ENCODE measurements at regions of chr1 and their contacts with region 1.

Region 1: GRCh38 chr1:113042285-113043143 is 30.5 kb upstream of the LRIG2 start:
- DNase-seq: peak; percentile 49
- ATAC-seq: peak; percentile 12
- H3K4me3 Mint-ChIP-seq: no peak overlapping the region
- H3K27ac Mint-ChIP-seq: no peak overlapping the region
- H3K4me1 Mint-ChIP-seq: peaks cover 17% of the 10 kb centered on the region
- H3K27me3 Mint-ChIP-seq: peaks cover 8% of the 10 kb centered on the region

Region 2: DNA sequence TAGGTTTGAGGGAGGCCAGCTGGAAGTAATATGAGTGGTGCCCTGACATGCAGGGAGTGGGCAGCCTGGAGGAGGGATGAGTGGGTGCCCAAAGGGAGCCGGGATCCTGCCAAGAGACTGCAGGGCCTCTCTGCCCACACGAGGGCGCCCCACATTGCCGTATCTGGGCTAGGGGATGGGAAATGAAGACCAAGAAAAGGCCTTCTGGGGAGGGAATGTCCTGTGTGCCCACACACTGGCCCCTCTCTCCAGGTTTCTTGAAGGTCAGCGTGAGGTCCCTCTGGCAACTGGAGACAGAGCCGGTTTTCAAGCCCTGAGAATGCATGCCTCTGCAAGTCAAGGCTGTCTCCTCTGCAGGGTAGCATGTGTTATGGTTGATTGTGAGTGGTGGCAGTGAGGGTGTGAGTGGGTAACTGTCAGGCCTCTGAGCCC is 233.2 kb before region 1 on chr1:
- CTCF ChIA-PET with region 1: interaction called, 3 read pairs
- POLR2A ChIA-PET with region 1: no interaction called
- intact Hi-C with region 1: loop called in 1 of 2 experiments (anchors 1 kb)
- DNase-seq: peak; percentile 85
- ATAC-seq: peak; percentile 93
- H3K4me3 Mint-ChIP-seq: no peak overlapping the region
- H3K27ac Mint-ChIP-seq: no peak overlapping the region
- H3K4me1 Mint-ChIP-seq: no peaks in the 10 kb centered on the region
- H3K27me3 Mint-ChIP-seq: peaks cover 5% of the 10 kb centered on the region

Region 3: DNA sequence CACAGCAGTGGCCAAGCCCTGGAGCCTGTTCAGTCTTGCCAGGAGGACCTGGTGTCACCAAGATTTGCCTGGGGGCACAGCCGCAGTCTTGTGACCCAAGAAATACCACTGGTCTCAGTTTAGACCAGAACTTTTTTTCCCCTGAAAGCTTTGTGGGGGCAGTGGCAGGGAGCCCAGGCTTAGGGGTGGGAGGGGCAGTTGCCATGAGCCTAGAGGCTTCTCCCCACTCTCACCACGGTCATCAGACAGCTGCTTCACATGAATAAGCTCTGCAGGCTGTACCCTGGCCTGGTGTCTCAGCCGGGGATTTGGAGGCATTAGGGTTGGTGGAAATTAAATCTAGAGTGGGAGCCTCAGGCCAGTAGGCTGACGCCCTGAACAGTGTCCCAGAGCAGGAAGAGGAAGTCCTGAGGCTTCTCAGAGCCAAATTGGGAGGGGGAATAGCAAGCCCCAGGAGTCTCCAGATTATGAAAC is 160.2 kb before region 1 on chr1:
- CTCF ChIA-PET with region 1: interaction called, 4 read pairs
- POLR2A ChIA-PET with region 1: no interaction called
- intact Hi-C with region 1: loop called (anchors 1 to 2 kb)
- DNase-seq: no peak
- ATAC-seq: no peak
- H3K4me3 Mint-ChIP-seq: no peak overlapping the region
- H3K27ac Mint-ChIP-seq: no peak overlapping the region
- H3K4me1 Mint-ChIP-seq: no peaks in the 10 kb centered on the region
- H3K27me3 Mint-ChIP-seq: peaks cover 3% of the 10 kb centered on the region